ENCODE measurements at regions of chr19 and their contacts with region 1.

Region 1: GRCh38 chr19:41548954-41549688 is 26.8 kb upstream of the CEACAM21 start:
- DNase-seq: peak in 8 of 9 donors; percentile 68 to 82 (median 78)
- ATAC-seq: peak; percentile 82
- H3K4me3 ChIP-seq: peak overlapping the region; percentile 77
- H3K4me3 Mint-ChIP-seq: peak overlapping the region; percentile 91 to 100 (median 98)
- H3K27ac ChIP-seq: peak overlapping the region; percentile 88
- H3K27ac Mint-ChIP-seq: peak overlapping the region; percentile 92 to 97 (median 96)
- H3K4me1 ChIP-seq: peaks cover 43 to 53% of the 10 kb centered on the region in 2 donors
- H3K4me1 Mint-ChIP-seq: peaks cover 58 to 72% (median 61%) of the 10 kb centered on the region in 7 donors
- H3K27me3 ChIP-seq: no peaks in the 10 kb centered on the region
- H3K27me3 Mint-ChIP-seq: no peaks in the 10 kb centered on the region

Region 2: DNA sequence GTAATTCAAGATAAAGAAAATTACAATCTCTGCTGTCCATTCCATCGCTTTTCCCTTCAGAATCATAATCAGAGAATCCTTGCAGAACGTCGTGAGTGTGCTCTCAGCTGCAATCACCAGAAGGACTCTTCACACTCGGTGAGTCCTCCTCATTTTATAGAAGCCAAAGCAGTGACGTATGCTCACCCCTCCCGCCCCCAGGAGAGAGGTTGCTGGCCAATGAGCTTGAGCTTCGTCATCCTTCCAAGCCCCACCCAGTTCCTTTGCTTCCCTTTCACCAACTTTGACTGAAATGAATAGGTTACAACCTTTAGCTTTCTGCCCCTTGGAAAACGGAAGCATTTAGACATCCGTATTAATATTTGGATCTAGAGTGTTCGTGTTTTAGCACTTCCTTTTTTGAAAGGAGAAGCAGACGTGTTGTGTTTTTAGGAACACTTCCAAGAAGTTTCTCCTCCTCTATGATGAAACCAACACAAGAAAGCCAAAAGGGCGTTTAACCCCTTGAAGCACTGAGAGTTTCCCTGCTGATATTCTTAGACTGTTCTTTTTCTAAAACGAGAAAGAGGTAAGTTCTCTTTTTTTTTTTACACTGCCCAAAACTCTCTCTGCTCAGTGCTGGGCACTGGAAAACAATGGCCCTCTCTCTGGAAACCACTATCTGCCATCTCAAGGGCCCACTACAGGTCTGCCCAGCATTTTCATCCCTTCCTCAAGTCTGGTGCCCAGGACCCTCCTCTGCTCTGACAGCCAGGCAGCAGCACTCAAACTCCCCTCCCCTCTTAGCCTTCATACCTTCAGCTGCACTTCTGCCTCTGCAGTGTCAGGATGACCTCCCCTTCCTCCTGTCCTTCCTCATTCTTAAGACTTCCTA is 17.4 kb before region 1 on chr19:
- CTCF ChIA-PET with region 1: interaction called, 384 read pairs
- POLR2A ChIA-PET with region 1: interaction called, 518 read pairs
- intact Hi-C with region 1: loop called (anchors 1 to 2 kb)
- DNase-seq: peak; percentile 59 to 95 (median 93)
- ATAC-seq: peak; percentile 95
- H3K4me3 ChIP-seq: peak overlapping the region; percentile 46
- H3K4me3 Mint-ChIP-seq: peak overlapping the region; percentile 77 to 98 (median 84)
- H3K27ac ChIP-seq: peak overlapping the region; percentile 75
- H3K27ac Mint-ChIP-seq: peak overlapping the region; percentile 83 to 98 (median 92)
- H3K4me1 ChIP-seq: peaks cover 32 to 46% of the 10 kb centered on the region in 2 donors
- H3K4me1 Mint-ChIP-seq: peaks cover 50 to 70% (median 64%) of the 10 kb centered on the region in 7 donors
- H3K27me3 ChIP-seq: no peaks in the 10 kb centered on the region
- H3K27me3 Mint-ChIP-seq: peaks cover 0 to 7% (median 0%) of the 10 kb centered on the region in 5 donors

Region 3: DNA sequence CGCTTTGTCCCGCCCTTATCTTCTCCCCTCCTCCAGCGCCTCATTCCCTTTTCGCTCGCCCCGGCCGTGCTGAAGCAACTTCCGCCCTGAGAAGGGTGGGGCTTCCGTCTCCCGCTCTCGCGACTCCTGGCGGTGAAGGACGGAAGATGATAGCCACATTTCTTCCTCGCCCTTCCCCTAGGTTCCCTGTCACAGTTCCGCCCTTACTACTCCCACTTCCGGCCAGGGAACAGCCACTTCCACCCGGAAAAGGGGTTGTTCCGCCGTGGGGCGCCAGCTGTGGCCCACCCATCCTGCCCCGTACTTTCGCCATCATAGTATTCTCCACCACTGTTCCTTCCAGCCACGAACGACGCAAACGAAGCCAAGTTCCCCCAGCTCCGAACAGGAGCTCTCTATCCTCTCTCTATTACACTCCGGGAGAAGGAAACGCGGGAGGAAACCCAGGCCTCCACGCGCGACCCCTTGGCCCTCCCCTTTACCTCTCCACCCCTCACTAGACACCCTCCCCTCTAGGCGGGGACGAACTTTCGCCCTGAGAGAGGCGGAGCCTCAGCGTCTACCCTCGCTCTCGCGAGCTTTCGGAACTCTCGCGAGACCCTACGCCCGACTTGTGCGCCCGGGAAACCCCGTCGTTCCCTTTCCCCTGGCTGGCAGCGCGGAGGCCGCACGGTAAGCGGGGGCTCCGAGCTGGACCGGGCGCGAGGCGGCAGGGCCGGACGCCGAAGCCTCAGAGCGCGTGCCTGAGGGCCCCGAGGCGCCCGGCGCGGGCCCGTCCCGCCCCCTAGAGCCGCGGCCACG is 310.7 kb after region 1 on chr19 and contains the start of gene RPS19:
- CTCF ChIA-PET with region 1: no interaction called
- POLR2A ChIA-PET with region 1: no interaction called
- intact Hi-C with region 1: no loop called
- DNase-seq: peak; percentile 95 to 99 (median 98)
- ATAC-seq: peak; percentile 92
- H3K4me3 ChIP-seq: peak within 1 kb of the TSS; percentile 90
- H3K4me3 Mint-ChIP-seq: peak within 1 kb of the TSS; percentile 86 to 95 (median 93)
- H3K27ac ChIP-seq: peak within 1 kb of the TSS; percentile 89
- H3K27ac Mint-ChIP-seq: peak within 1 kb of the TSS; percentile 91 to 98 (median 95)
- H3K4me1 ChIP-seq: peaks cover 39 to 43% of the 10 kb centered on the region in 2 donors
- H3K4me1 Mint-ChIP-seq: peaks cover 34 to 47% (median 41%) of the 10 kb centered on the region in 7 donors
- H3K27me3 ChIP-seq: no peaks in the 10 kb centered on the region
- H3K27me3 Mint-ChIP-seq: peaks cover 0 to 9% (median 0%) of the 10 kb centered on the region in 5 donors
- total RNA-seq, gene RPS19: 2,739 to 3,712 (median 3,396) TPM